Naive thymus-derived CD4-positive, alpha-beta T cell (primary cell): ENCODE measurements at regions of chr11 and their contacts with region 1.

Region 1: DNA sequence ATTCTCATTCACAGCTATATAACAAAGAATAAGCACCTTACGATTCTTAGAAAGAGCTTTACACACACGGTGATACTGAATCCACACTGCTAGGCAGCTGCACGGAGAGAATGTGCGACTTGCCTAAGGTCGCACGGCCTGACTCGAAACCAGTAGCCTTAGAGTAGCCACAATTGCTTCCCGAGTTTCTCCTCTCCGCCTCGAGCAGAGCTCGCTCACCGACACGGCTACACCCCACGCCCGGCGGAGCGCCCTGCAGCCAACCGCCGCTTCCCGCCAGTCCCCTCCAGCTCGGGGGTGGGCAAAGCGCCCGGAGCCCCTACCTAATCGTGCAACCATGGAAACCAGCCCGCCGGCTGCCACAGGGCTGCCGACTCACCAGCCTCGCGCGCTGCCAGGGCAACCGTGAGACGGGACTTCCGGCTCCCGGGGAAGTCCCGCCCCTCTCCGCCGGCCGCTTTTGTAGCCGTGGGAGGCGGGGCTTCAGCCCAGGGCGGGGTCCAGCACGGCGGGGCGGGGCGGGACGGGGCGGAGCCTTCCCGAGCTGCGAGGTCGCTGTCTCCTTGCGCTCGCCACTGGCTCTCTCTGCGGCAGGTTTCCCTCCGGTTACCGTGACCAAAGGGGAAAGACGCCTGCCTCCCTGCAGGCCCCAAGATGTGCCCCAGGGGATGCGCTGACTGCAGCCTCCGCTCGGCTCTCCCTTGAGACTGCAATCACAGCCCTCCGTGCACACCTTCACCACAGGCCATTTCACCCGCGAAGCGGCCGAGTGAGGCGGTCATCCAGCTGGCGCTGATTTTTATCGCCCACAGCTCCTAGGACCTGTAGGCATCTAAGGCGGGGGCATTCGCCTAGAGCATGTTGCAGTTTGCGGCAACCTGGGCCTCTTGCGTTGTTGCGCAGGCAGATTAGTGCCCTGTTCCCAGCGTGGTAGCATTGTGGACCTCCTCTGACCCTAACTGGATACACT is 1.1 kb downstream of the BSCL2 start:
- DNase-seq: peak; percentile 86 to 96 (median 90)
- ATAC-seq: peak; percentile 79
- H3K4me3 ChIP-seq: peak overlapping the region; percentile 74
- H3K4me3 Mint-ChIP-seq: peak overlapping the region; percentile 83 to 97 (median 90)
- H3K27ac ChIP-seq: peak overlapping the region; percentile 73
- H3K27ac Mint-ChIP-seq: peak overlapping the region; percentile 69 to 92 (median 87)
- H3K4me1 ChIP-seq: peaks cover 41 to 46% of the 10 kb centered on the region in 2 donors
- H3K4me1 Mint-ChIP-seq: peaks cover 17 to 49% (median 44%) of the 10 kb centered on the region in 7 donors
- H3K27me3 ChIP-seq: no peaks in the 10 kb centered on the region
- H3K27me3 Mint-ChIP-seq: no peaks in the 10 kb centered on the region

Region 2: DNA sequence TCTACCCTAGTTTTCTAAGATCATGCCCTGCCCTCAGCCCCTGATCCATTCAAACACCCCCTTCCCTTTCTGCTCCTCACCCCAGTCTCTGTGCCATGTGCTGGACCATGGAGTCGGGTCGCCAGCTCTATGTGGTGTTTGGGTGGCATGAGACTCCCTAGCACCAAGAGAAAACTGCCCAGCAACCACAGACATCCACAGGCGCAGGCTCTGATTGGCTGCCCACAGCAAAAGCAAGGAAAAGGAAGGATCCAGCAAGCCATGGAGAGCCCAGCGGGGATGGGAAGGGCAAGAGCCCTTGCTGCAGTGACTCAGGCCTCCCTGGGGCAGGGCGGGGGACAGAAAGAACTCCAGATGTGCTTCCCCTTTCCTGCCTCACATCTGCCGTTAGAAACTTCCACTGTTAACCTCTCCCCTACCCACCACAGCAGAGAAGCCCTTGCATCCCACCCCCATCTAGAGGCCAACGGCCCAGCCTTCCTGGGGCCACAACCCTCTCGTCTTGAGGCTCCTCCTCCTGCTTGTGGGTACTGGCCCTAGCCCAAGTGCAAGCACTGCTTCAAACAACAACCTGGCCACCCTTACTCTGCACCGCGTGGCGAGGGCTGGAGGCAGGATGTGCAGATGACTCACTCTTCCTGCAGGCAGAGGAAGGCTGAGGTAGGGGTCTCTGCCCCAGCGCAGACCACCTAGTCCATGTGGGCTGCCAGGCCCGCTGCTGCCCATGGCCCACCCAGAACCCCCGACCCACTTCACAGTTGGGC is 149.9 kb before region 1 on chr11:
- CTCF ChIA-PET with region 1: no interaction called
- POLR2A ChIA-PET with region 1: interaction called, 11 read pairs
- intact Hi-C with region 1: no loop called
- DNase-seq: peak; percentile 58 to 82 (median 72)
- ATAC-seq: peak; percentile 48
- H3K4me3 ChIP-seq: peak overlapping the region; percentile 42
- H3K4me3 Mint-ChIP-seq: peak overlapping the region; percentile 65 to 87 (median 78)
- H3K27ac ChIP-seq: peak overlapping the region; percentile 87
- H3K27ac Mint-ChIP-seq: peak overlapping the region; percentile 87 to 100 (median 98)
- H3K4me1 ChIP-seq: peaks cover 69 to 84% of the 10 kb centered on the region in 2 donors
- H3K4me1 Mint-ChIP-seq: peaks cover 62 to 88% (median 81%) of the 10 kb centered on the region in 7 donors
- H3K27me3 ChIP-seq: no peaks in the 10 kb centered on the region
- H3K27me3 Mint-ChIP-seq: peaks cover 0 to 2% (median 0%) of the 10 kb centered on the region in 5 donors

Region 3: GRCh38 chr11:62612366-62613290 is 93.5 kb before region 1 on chr11 and contains the starts of genes EML3 and ROM1:
- CTCF ChIA-PET with region 1: no interaction called
- POLR2A ChIA-PET with region 1: interaction called, 3 read pairs
- intact Hi-C with region 1: loop called in 1 of 2 experiments (anchors 1 kb)
- DNase-seq: peak; percentile 74 to 96 (median 83)
- ATAC-seq: peak; percentile 90
- H3K4me3 ChIP-seq: peak within 1 kb of the TSS; percentile 99
- H3K4me3 Mint-ChIP-seq: peak within 1 kb of the TSS; percentile 89 to 100 (median 96)
- H3K27ac ChIP-seq: peak within 1 kb of the TSS; percentile 92
- H3K27ac Mint-ChIP-seq: peak within 1 kb of the TSS; percentile 93 to 100 (median 97)
- H3K4me1 ChIP-seq: peaks cover 19 to 32% of the 10 kb centered on the region in 2 donors
- H3K4me1 Mint-ChIP-seq: peaks cover 31 to 56% (median 48%) of the 10 kb centered on the region in 7 donors
- H3K27me3 ChIP-seq: no peaks in the 10 kb centered on the region
- H3K27me3 Mint-ChIP-seq: no peaks in the 10 kb centered on the region
- total RNA-seq, gene EML3: 152 to 209 (median 188) TPM
- total RNA-seq, gene ROM1: 1.2 to 2.4 (median 2.0) TPM

Region 4: GRCh38 chr11:62665075-62665598 is 41.0 kb before region 1 on chr11 and contains the starts of genes C11orf98 and CSKMT:
- CTCF ChIA-PET with region 1: interaction called, 3 read pairs
- POLR2A ChIA-PET with region 1: interaction called, 81 read pairs
- intact Hi-C with region 1: loop called in 1 of 2 experiments (anchors 1 kb)
- DNase-seq: peak; percentile 90 to 99 (median 95)
- ATAC-seq: peak; percentile 97
- H3K4me3 ChIP-seq: peak within 1 kb of the TSS; percentile 85
- H3K4me3 Mint-ChIP-seq: peak within 1 kb of the TSS; percentile 93 to 98 (median 96)
- H3K27ac ChIP-seq: peak within 1 kb of the TSS; percentile 85
- H3K27ac Mint-ChIP-seq: peak within 1 kb of the TSS; percentile 89 to 97 (median 93)
- H3K4me1 ChIP-seq: peaks cover 16 to 21% of the 10 kb centered on the region in 2 donors
- H3K4me1 Mint-ChIP-seq: peaks cover 13 to 45% (median 32%) of the 10 kb centered on the region in 7 donors
- H3K27me3 ChIP-seq: no peaks in the 10 kb centered on the region
- H3K27me3 Mint-ChIP-seq: no peaks in the 10 kb centered on the region
- total RNA-seq, gene C11orf98: 23.2 to 103 (median 47.6) TPM
- total RNA-seq, gene CSKMT: 8.9 to 29.3 (median 23.7) TPM

Region 5: DNA sequence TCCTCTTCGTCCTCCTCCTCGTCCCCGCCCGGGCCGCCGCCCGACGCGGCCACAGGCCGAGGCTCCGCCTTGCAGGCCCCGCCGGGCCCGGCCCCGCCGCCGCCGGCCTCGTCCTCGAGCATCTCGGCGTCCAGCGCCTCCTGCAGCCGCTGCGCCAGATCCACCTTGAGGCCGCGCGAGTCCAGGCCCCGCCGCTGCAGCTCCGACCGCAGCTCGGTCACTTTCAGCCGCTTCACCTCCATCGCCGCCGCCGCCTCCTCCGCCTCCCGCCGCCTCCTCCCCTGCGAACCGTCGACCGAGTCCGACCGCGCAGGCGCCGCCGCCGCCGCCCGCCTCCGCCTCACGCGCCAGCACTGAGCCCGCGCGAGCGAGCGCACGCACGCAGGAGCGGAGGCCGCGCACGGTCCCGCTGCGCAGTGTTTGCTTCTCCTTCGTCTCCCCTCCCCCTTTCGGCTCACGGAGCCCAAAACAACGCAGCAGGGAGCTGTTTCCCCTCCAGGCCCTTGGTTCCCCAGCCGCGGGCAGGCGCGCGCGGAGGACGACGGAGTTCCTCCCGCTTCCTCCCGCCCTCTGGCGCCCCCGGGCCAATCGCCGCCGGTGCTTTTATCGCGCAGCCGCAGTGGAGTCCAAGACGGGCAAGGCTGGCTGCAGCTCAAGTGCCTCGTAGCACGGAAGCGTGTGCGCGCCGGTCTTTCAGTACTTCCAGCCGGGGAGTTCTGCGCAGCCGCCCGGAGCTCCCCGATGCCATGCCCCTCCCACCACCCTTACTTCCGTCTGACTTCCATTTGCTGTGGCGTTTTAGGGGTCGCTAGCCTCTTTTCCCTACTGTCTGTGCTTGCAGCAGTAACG is 21.0 kb after region 1 on chr11 and contains the start of gene HNRNPUL2:
- CTCF ChIA-PET with region 1: interaction called, 6 read pairs
- POLR2A ChIA-PET with region 1: interaction called, 347 read pairs
- intact Hi-C with region 1: loop called (anchors 1 kb)
- DNase-seq: peak; percentile 96 to 100 (median 99)
- ATAC-seq: peak; percentile 89
- H3K4me3 ChIP-seq: peak within 1 kb of the TSS; percentile 87
- H3K4me3 Mint-ChIP-seq: peak within 1 kb of the TSS; percentile 91 to 99 (median 96)
- H3K27ac ChIP-seq: peak within 1 kb of the TSS; percentile 92
- H3K27ac Mint-ChIP-seq: peak within 1 kb of the TSS; percentile 95 to 100 (median 98)
- H3K4me1 ChIP-seq: peaks cover 36 to 38% of the 10 kb centered on the region in 2 donors
- H3K4me1 Mint-ChIP-seq: peaks cover 23 to 65% (median 58%) of the 10 kb centered on the region in 7 donors
- H3K27me3 ChIP-seq: no peaks in the 10 kb centered on the region
- H3K27me3 Mint-ChIP-seq: peaks cover 0 to 2% (median 0%) of the 10 kb centered on the region in 5 donors
- total RNA-seq, gene HNRNPUL2: 43.4 to 77.5 (median 65.3) TPM

Region 6: GRCh38 chr11:62787005-62787759 is 81.0 kb after region 1 on chr11 and contains the start of gene TMEM179B:
- CTCF ChIA-PET with region 1: interaction called, 4 read pairs
- POLR2A ChIA-PET with region 1: interaction called, 3 read pairs
- intact Hi-C with region 1: loop called (anchors 1 kb)
- DNase-seq: peak; percentile 87 to 98 (median 95)
- ATAC-seq: peak; percentile 83
- H3K4me3 ChIP-seq: peak within 1 kb of the TSS; percentile 82
- H3K4me3 Mint-ChIP-seq: peak within 1 kb of the TSS; percentile 93 to 97 (median 96)
- H3K27ac ChIP-seq: peak within 1 kb of the TSS; percentile 93
- H3K27ac Mint-ChIP-seq: peak within 1 kb of the TSS; percentile 91 to 99 (median 96)
- H3K4me1 ChIP-seq: peaks cover 32 to 38% of the 10 kb centered on the region in 2 donors
- H3K4me1 Mint-ChIP-seq: peaks cover 22 to 59% (median 42%) of the 10 kb centered on the region in 7 donors
- H3K27me3 ChIP-seq: no peaks in the 10 kb centered on the region
- H3K27me3 Mint-ChIP-seq: no peaks in the 10 kb centered on the region
- total RNA-seq, gene TMEM179B: 23.2 to 72.3 (median 50.9) TPM

Region 7: DNA sequence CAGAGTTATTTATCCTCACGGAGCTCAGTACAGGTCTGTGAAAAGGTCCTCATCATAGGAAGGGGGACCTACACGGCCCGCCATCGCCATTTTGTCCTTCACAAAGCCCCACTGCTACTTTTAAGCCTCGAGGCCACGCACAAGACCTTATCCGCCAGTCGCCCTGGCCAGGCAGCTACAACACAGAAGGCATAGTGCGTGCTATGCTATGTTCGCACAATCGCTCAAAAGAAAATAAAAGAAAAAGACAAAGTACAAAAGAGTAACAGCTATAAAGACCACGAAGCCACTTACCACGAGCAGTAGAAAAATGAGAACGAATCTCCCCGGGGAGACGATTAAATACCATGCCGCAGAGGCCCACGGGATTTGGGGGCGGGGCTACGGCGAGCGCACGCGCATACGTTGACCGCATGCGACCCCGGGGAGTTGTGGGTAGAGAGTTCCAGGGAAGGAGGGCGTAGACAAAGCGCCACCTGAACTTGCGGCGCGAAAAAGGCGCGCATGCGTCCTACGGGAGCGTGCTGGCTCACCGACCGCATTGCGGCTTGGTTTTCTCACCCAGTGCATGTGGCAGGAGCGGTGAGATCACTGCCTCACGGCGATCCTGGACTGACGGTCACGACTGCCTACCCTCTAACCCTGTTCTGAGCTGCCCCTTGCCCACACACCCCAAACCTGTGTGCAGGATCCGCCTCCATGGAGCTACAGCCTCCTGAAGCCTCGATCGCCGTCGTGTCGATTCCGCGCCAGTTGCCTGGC is 149.6 kb after region 1 on chr11:
- CTCF ChIA-PET with region 1: no interaction called
- POLR2A ChIA-PET with region 1: interaction called, 51 read pairs
- intact Hi-C with region 1: loop called (anchors 1 kb)
- DNase-seq: peak; percentile 96 to 100 (median 99)
- ATAC-seq: peak; percentile 97
- H3K4me3 ChIP-seq: peak overlapping the region; percentile 97
- H3K4me3 Mint-ChIP-seq: peak overlapping the region; percentile 93 to 100 (median 98)
- H3K27ac ChIP-seq: peak overlapping the region; percentile 85
- H3K27ac Mint-ChIP-seq: peak overlapping the region; percentile 86 to 98 (median 94)
- H3K4me1 ChIP-seq: peaks cover 33 to 39% of the 10 kb centered on the region in 2 donors
- H3K4me1 Mint-ChIP-seq: peaks cover 34 to 77% (median 46%) of the 10 kb centered on the region in 7 donors
- H3K27me3 ChIP-seq: no peaks in the 10 kb centered on the region
- H3K27me3 Mint-ChIP-seq: peaks cover 0 to 6% (median 0%) of the 10 kb centered on the region in 5 donors